Activated CD4-positive, alpha-beta memory T cell treated with anti-CD3 and anti-CD28 coated beads for 36 hours (primary cell): ENCODE measurements at regions of chr12 and their contacts with region 1.

Region 1: GRCh38 chr12:101876861-101877815 is at the start of gene DRAM1:
- DNase-seq: peak; percentile 85
- H3K4me3 Mint-ChIP-seq: peak within 1 kb of the TSS; percentile 87
- H3K27ac Mint-ChIP-seq: peak within 1 kb of the TSS; percentile 48
- H3K4me1 Mint-ChIP-seq: peaks cover 8% of the 10 kb centered on the region
- H3K27me3 Mint-ChIP-seq: no peaks in the 10 kb centered on the region
- total RNA-seq, gene DRAM1: 2.6 to 2.8 TPM

Region 2: DNA sequence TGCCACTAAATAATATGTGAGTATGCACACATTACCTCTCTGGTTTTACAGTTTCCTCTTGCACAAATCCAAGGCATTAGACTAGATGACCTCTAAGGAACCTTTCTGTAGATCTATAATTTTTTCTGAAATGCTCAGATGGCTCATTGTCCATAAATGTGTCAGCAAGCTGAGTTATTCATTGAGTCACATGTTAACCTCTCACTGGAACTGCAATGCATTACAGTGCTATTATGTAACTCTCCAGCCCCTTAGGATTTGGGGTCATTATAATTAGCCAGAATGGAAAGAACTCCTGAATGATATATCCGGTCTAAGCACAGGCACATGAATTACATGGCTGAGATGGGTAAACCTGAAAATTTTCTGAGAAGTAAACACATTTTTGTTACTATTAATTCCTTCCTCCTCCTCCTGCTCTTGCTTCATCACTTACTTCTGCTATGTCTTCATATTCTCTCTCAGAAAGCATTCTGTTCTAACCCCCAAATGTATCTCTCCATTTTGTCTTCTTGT is 20.0 kb before region 1 on chr12:
- CTCF ChIA-PET with region 1: no interaction called
- POLR2A ChIA-PET with region 1: no interaction called
- intact Hi-C with region 1: loop called (anchors 1 kb)
- DNase-seq: no peak
- H3K4me3 Mint-ChIP-seq: no peak overlapping the region
- H3K27ac Mint-ChIP-seq: no peak overlapping the region
- H3K4me1 Mint-ChIP-seq: peaks cover 23% of the 10 kb centered on the region
- H3K27me3 Mint-ChIP-seq: no peaks in the 10 kb centered on the region

Region 3: DNA sequence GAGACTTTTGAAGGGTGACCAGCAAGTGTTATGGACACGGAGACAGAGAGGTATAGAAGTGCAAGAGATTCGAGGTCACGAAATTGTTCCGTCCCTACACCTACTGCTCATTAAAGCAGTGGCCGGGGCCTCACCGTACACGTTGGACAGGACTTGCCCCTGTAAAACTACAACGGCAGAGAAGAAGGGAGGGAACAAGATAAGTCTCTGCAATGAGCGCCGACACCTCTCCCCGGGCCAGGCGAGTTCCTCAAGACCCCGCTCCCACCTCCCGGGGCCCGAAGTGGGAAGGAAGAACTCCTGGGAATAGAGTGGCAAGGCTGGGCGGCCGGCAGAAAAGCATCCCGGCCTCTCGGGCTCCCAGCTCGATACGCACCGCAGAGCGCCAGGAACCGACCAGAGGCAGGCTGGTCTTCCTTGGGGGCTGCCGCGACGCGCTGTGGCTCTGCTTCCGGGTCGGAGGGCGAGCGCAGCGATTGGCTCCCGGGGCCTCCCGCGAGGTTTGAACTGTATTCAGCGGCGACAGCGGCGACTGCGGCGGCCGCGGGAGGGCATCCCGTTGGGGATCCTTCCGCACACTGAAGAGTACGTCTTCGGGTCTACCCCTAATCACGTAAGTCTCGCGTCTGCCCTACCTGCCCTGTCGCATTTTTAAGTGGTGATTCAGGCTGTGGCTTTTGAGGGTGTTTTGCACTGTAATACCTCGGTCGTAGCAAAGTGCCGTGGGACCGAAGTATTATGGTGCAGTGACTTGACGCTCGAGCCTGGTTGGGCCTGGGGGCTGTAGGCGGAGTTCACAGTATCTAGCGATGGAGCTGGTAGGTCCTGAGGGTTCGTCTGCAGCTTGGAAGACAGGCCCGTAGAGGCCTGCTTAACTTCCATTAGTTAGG is 242.8 kb after region 1 on chr12 and contains the starts of genes NUP37 and PARPBP:
- CTCF ChIA-PET with region 1: no interaction called
- POLR2A ChIA-PET with region 1: no interaction called
- intact Hi-C with region 1: loop called (anchors 2 kb)
- DNase-seq: peak; percentile 95
- H3K4me3 Mint-ChIP-seq: peak within 1 kb of the TSS; percentile 87
- H3K27ac Mint-ChIP-seq: peak within 1 kb of the TSS; percentile 82
- H3K4me1 Mint-ChIP-seq: peaks cover 19% of the 10 kb centered on the region
- H3K27me3 Mint-ChIP-seq: no peaks in the 10 kb centered on the region
- total RNA-seq, gene NUP37: 86.8 to 89.5 TPM
- total RNA-seq, gene PARPBP: 24.0 to 25.9 TPM